ENCODE measurements at regions of chr6 and their contacts with region 1.

Region 1: GRCh38 chr6:26156076-26156849 is 69.0 kb downstream of the HFE start:
- DNase-seq: peak; percentile 98
- H3K4me3 ChIP-seq: peak overlapping the region; percentile 66 to 86 (median 69)
- H3K27ac ChIP-seq: peak overlapping the region; percentile 94 to 100 (median 98)
- H3K4me1 ChIP-seq: peaks cover 0 to 22% (median 9%) of the 10 kb centered on the region in 4 donors
- H3K27me3 ChIP-seq: no peaks in the 10 kb centered on the region
- CTCF ChIP-seq: no peak
- EP300 ChIP-seq: peak in 2 of 4 donors; percentile 25 to 57
- POLR2A ChIP-seq: peak; percentile 99 to 100

Region 2: GRCh38 chr6:26054857-26055669 is 101.2 kb before region 1 on chr6:
- intact Hi-C with region 1: loop called (anchors 5 kb)
- DNase-seq: peak; percentile 97
- H3K4me3 ChIP-seq: peak overlapping the region; percentile 59 to 83 (median 78)
- H3K27ac ChIP-seq: peak overlapping the region; percentile 88 to 99 (median 97)
- H3K4me1 ChIP-seq: peaks cover 2 to 15% (median 7%) of the 10 kb centered on the region in 4 donors
- H3K27me3 ChIP-seq: no peaks in the 10 kb centered on the region
- CTCF ChIP-seq: peak in 3 of 4 experiments; percentile 12 to 39 (median 34)
- EP300 ChIP-seq: no peak
- POLR2A ChIP-seq: peak; percentile 72 to 74

Region 3: DNA sequence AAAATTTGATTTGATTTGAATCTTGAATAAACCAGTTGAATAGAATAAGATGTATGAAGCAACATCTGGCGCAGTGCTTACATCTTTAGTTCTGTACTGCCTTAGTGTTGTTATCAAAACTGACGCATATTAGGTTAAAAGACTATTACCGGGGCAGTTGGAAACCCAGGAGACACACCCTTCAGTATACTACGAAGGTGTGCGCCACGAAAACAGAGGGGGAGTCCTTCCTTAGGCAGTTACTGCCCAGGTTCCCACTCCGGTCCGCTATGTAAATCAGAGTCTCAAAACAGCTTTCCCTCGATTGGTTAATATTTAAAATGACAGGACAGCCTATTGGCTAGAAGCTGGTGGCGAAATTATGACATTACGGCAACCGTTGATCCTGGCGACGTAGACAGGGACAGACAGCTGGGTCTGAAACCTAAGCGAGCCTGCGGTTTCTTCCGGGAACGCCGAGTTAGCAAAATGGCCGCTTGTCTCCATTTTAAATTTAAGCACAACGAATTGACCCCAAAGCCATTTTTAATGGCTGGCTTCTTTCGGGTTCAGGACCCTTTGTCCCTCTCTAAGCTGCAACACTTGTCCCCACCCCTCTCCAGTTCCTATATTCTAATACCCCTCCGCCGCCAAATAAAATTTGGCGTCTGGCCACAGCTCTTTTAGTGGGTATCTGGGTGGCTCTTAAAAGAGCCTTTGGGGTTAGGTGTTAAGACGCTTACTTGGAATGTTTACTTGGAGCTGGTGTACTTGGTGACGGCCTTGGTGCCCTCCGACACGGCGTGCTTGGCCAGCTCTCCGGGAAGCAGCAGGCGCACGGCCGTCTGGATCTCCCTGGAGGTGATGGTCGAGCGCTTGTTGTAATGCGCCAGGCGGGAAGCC is 33.2 kb before region 1 on chr6:
- intact Hi-C with region 1: loop called (anchors 1 kb)
- DNase-seq: peak; percentile 98
- H3K4me3 ChIP-seq: peak overlapping the region; percentile 80 to 94 (median 90)
- H3K27ac ChIP-seq: peak overlapping the region; percentile 96 to 99 (median 98)
- H3K4me1 ChIP-seq: peaks cover 0 to 21% (median 17%) of the 10 kb centered on the region in 4 donors
- H3K27me3 ChIP-seq: no peaks in the 10 kb centered on the region
- CTCF ChIP-seq: no peak
- EP300 ChIP-seq: peak; percentile 72 to 92 (median 89)
- POLR2A ChIP-seq: peak; percentile 84 to 91

Region 4: GRCh38 chr6:26204332-26205165 is 48.3 kb after region 1 on chr6:
- intact Hi-C with region 1: loop called (anchors 2 kb)
- DNase-seq: peak; percentile 99
- H3K4me3 ChIP-seq: peak overlapping the region; percentile 61 to 75 (median 65)
- H3K27ac ChIP-seq: peak overlapping the region; percentile 95 to 98 (median 98)
- H3K4me1 ChIP-seq: peaks cover 0 to 29% (median 16%) of the 10 kb centered on the region in 4 donors
- H3K27me3 ChIP-seq: no peaks in the 10 kb centered on the region
- CTCF ChIP-seq: peak in 2 of 4 experiments; percentile 8 to 34
- EP300 ChIP-seq: peak in 3 of 4 donors; percentile 67 to 81 (median 81)
- POLR2A ChIP-seq: peak; percentile 99

Region 5: GRCh38 chr6:26383624-26384417 is 227.6 kb after region 1 on chr6:
- intact Hi-C with region 1: no loop called
- DNase-seq: no peak
- H3K4me3 ChIP-seq: peak overlapping the region; percentile 73 to 75 (median 74)
- H3K27ac ChIP-seq: peak overlapping the region; percentile 78 to 83 (median 80)
- H3K4me1 ChIP-seq: peaks cover 0 to 16% (median 11%) of the 10 kb centered on the region in 4 donors
- H3K27me3 ChIP-seq: no peaks in the 10 kb centered on the region
- CTCF ChIP-seq: no peak
- EP300 ChIP-seq: no peak
- POLR2A ChIP-seq: no peak

Region 6: GRCh38 chr6:27132532-27133280 is 976.4 kb after region 1 on chr6:
- intact Hi-C with region 1: loop called (anchors 10 kb)
- DNase-seq: peak; percentile 96
- H3K4me3 ChIP-seq: peak overlapping the region; percentile 38 to 55 (median 52)
- H3K27ac ChIP-seq: peak overlapping the region; percentile 87 to 95 (median 92)
- H3K4me1 ChIP-seq: peaks cover 0 to 22% (median 11%) of the 10 kb centered on the region in 4 donors
- H3K27me3 ChIP-seq: no peaks in the 10 kb centered on the region
- CTCF ChIP-seq: no peak
- EP300 ChIP-seq: no peak
- POLR2A ChIP-seq: peak; percentile 93 to 95

Measured in sigmoid colon (tissue), 7 donors.